Activated T-helper 1 cell treated with anti-CD3 and anti-CD28 coated beads, Interleukin-12 subunit alpha, Interleukin-12 subunit beta, Interleukin-2, Interleukin-4 antibody, amounts not matched to agents 30 ng/mL and 10 ng/mL and 1 ng/mL, durations not matched to agents 14 hours and 24 hours and 36 hours (primary cell): ENCODE measurements at regions of chr2 and their contacts with region 1.

Region 1: DNA sequence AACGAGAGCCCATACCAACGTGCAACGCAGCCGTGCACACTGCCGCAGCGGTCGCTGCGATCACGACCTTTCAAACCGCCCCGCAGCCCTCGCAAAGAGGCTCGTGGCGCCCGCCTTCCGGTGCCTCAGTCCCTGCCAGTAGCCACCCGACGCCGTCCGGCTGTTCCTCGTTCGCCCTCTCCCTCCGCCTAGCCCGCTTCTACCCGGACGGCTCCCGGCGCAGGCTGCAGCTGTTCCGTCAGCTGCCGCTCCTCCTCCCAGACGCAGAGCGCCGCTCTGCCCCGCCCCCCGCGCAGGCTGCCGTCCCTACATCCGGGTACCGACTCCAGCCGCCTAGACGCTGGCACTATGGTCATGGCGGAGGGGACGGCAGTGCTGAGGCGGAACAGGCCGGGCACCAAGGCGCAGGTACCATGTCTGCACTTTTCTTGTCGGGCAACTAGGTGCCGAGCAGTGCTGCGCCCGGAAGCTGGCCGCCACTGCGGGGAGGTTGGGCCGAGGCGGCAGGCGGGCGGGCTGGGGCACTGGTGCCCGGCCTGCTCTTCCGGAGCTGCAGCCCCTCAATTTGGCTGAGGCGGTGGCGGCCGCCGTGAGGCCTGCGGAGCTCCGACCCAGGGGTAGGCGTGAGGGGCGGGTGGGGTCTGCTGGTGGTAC is at the start of gene MOB4:
- DNase-seq: peak; percentile 95
- H3K4me3 Mint-ChIP-seq: peak within 1 kb of the TSS; percentile 98
- H3K27ac Mint-ChIP-seq: peak within 1 kb of the TSS; percentile 90
- H3K4me1 Mint-ChIP-seq: peaks cover 32% of the 10 kb centered on the region
- H3K27me3 Mint-ChIP-seq: no peaks in the 10 kb centered on the region
- total RNA-seq, gene MOB4: 25.1 and 27.2 TPM in 2 replicates

Region 2: GRCh38 chr2:196639180-196640030 is 876.5 kb before region 1 on chr2 and contains the start of gene CCDC150:
- intact Hi-C with region 1: loop called (anchors 5 kb)
- DNase-seq: peak; percentile 93
- H3K4me3 Mint-ChIP-seq: peak within 1 kb of the TSS; percentile 78
- H3K27ac Mint-ChIP-seq: peak within 1 kb of the TSS; percentile 81
- H3K4me1 Mint-ChIP-seq: peaks cover 28% of the 10 kb centered on the region
- H3K27me3 Mint-ChIP-seq: peaks cover 13% of the 10 kb centered on the region
- total RNA-seq, gene CCDC150: 16.7 and 19.6 TPM in 2 replicates

Region 3: DNA sequence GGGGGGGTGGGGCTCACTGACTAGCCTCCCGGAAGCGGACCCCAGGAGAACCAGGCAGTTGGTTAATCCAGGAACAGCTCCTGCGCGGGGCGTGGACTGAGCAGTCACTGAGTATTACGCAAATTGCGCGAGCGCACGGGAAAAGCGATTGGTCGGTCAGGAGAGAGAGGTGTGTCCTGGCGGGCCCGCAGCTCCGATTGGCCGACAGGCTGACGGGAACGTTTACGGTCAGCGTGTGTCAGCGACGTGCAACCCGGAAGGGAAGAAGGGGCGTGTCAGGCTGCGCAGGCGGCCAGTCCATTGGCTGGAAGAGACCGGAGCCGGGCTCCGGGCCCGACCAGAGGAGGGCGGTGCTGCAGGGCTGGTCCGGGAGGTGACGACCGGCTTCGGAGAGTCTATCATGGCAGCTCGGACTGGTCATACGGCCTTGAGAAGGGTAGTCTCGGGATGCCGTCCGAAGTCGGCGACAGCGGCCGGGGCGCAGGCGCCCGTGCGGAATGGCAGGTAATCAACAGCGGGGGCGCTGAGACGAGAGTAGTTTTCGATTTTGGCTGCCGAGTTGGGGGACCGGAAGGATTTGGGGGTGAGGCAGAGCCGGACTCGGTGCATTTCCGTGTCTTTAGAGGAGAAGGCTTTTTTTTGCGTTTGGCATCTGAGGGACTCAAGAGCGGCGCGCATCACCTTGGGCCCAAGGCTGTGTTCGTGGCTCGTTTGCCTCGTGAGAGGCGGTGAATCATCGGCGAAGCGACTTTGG is 62.5 kb before region 1 on chr2 and contains the start of gene COQ10B:
- intact Hi-C with region 1: loop called (anchors 1 kb)
- DNase-seq: peak; percentile 99
- H3K4me3 Mint-ChIP-seq: peak within 1 kb of the TSS; percentile 99
- H3K27ac Mint-ChIP-seq: peak within 1 kb of the TSS; percentile 100
- H3K4me1 Mint-ChIP-seq: peaks cover 40% of the 10 kb centered on the region
- H3K27me3 Mint-ChIP-seq: no peaks in the 10 kb centered on the region
- total RNA-seq, gene COQ10B: 26.9 and 28.8 TPM in 2 replicates

Region 4: GRCh38 chr2:197538412-197538811 is 22.5 kb after region 1 on chr2:
- intact Hi-C with region 1: loop called (anchors 2 kb)
- DNase-seq: no peak
- H3K4me3 Mint-ChIP-seq: no peak overlapping the region
- H3K27ac Mint-ChIP-seq: no peak overlapping the region
- H3K4me1 Mint-ChIP-seq: peaks cover 28% of the 10 kb centered on the region
- H3K27me3 Mint-ChIP-seq: no peaks in the 10 kb centered on the region

Region 5: GRCh38 chr2:197777823-197778407 is 262.0 kb after region 1 on chr2:
- intact Hi-C with region 1: loop called (anchors 5 kb)
- DNase-seq: peak; percentile 6
- H3K4me3 Mint-ChIP-seq: no peak overlapping the region
- H3K27ac Mint-ChIP-seq: no peak overlapping the region
- H3K4me1 Mint-ChIP-seq: no peaks in the 10 kb centered on the region
- H3K27me3 Mint-ChIP-seq: peaks cover 10% of the 10 kb centered on the region

Region 6: DNA sequence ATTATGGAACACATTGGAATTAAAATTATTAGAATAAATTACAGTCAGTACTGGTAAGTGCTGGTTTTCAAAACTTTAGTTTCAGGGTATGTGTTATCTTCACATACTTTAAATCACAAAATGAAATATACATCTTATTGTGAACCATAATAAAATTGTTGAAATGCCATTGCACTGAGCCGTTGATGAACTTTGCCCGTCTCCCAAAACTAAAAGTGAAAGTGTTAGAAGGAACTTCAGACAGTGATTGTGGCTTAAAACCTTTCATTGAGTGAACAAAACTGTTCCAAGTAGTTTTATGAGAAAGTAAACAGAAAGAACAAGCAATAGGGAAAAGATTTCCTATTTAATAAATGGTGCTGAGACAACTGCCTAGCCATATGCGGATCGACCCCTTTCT is 1100.1 kb after region 1 on chr2:
- intact Hi-C with region 1: no loop called
- DNase-seq: no peak
- H3K4me3 Mint-ChIP-seq: no peak overlapping the region
- H3K27ac Mint-ChIP-seq: no peak overlapping the region
- H3K4me1 Mint-ChIP-seq: no peaks in the 10 kb centered on the region
- H3K27me3 Mint-ChIP-seq: peaks cover 5% of the 10 kb centered on the region